GM12878 (cell line): ENCODE measurements at regions of chr5 and their contacts with region 1.

Region 1: GRCh38 chr5:176660860-176661641 is 13.8 kb downstream of the TSPAN17 start:
- DNase-seq: peak; percentile 16
- ATAC-seq: peak; percentile 89
- H3K4me3 ChIP-seq: no peak overlapping the region
- H3K27ac ChIP-seq: no peak overlapping the region
- H3K4me1 ChIP-seq: peaks cover 16% of the 10 kb centered on the region
- H3K27me3 ChIP-seq: no peaks in the 10 kb centered on the region
- CTCF ChIP-seq: peak; percentile 95 to 98 (median 96); a peak in 5 of 6 replicates
- EP300 ChIP-seq: no peak
- POLR2A ChIP-seq: no peak
- RAD21 ChIP-seq: peak; percentile 88

Region 2: GRCh38 chr5:175638305-175638704 is 1022.7 kb before region 1 on chr5:
- CTCF ChIA-PET with region 1: no interaction called
- POLR2A ChIA-PET with region 1: no interaction called
- RAD21 ChIA-PET with region 1: no interaction called
- SMC1A ChIA-PET with region 1: no interaction called
- in situ Hi-C with region 1: no loop called
- intact Hi-C with region 1: no loop called
- DNase-seq: no peak
- ATAC-seq: no peak
- H3K4me3 ChIP-seq: no peak overlapping the region
- H3K27ac ChIP-seq: no peak overlapping the region
- H3K4me1 ChIP-seq: no peaks in the 10 kb centered on the region
- H3K27me3 ChIP-seq: no peaks in the 10 kb centered on the region; a peak in 1 of 4 replicates
- CTCF ChIP-seq: no peak
- EP300 ChIP-seq: no peak
- POLR2A ChIP-seq: no peak
- RAD21 ChIP-seq: no peak

Region 3: GRCh38 chr5:176573564-176574296 is 87.3 kb before region 1 on chr5:
- CTCF ChIA-PET with region 1: interaction called, 27 read pairs
- POLR2A ChIA-PET with region 1: interaction called, 3 read pairs
- RAD21 ChIA-PET with region 1: interaction called, 5 read pairs
- SMC1A ChIA-PET with region 1: interaction called, 4 read pairs
- in situ Hi-C with region 1: no loop called
- intact Hi-C with region 1: no loop called
- DNase-seq: no peak
- ATAC-seq: peak; percentile 96
- H3K4me3 ChIP-seq: no peak overlapping the region
- H3K27ac ChIP-seq: no peak overlapping the region
- H3K4me1 ChIP-seq: no peaks in the 10 kb centered on the region
- H3K27me3 ChIP-seq: no peaks in the 10 kb centered on the region
- CTCF ChIP-seq: peak; percentile 78 to 86 (median 80)
- EP300 ChIP-seq: no peak
- POLR2A ChIP-seq: no peak
- RAD21 ChIP-seq: peak; percentile 81

Region 4: GRCh38 chr5:176675675-176676360 is 14.8 kb after region 1 on chr5:
- CTCF ChIA-PET with region 1: interaction called, 25 read pairs
- POLR2A ChIA-PET with region 1: no interaction called
- RAD21 ChIA-PET with region 1: interaction called, 16 read pairs
- SMC1A ChIA-PET with region 1: interaction called, 7 read pairs
- in situ Hi-C with region 1: no loop called
- intact Hi-C with region 1: no loop called
- DNase-seq: no peak
- ATAC-seq: no peak
- H3K4me3 ChIP-seq: no peak overlapping the region
- H3K27ac ChIP-seq: no peak overlapping the region
- H3K4me1 ChIP-seq: no peaks in the 10 kb centered on the region
- H3K27me3 ChIP-seq: peaks cover 0 to 5% of the 10 kb centered on the region in 2 experiments; a peak in 2 of 4 replicates
- CTCF ChIP-seq: peak in 2 of 3 experiments; percentile 8 to 13; a peak in 1 of 6 replicates
- EP300 ChIP-seq: no peak
- POLR2A ChIP-seq: no peak
- RAD21 ChIP-seq: no peak

Region 5: GRCh38 chr5:176744584-176744965 is 83.5 kb after region 1 on chr5:
- CTCF ChIA-PET with region 1: interaction called, 22 read pairs
- POLR2A ChIA-PET with region 1: no interaction called
- RAD21 ChIA-PET with region 1: interaction called, 13 read pairs
- SMC1A ChIA-PET with region 1: interaction called, 15 read pairs
- in situ Hi-C with region 1: no loop called
- intact Hi-C with region 1: loop called (anchors 1 kb)
- DNase-seq: no peak
- ATAC-seq: no peak; the same call in 2 of the 3 replicates
- H3K4me3 ChIP-seq: no peak overlapping the region
- H3K27ac ChIP-seq: no peak overlapping the region
- H3K4me1 ChIP-seq: no peaks in the 10 kb centered on the region; the same call in 1 of the 2 replicates
- H3K27me3 ChIP-seq: peaks cover 10 to 16% of the 10 kb centered on the region in 2 experiments
- CTCF ChIP-seq: peak in 2 of 3 experiments; percentile 26 to 40; a peak in 2 of 6 replicates
- EP300 ChIP-seq: no peak
- POLR2A ChIP-seq: no peak
- RAD21 ChIP-seq: 0 out of 2 replicates have a peak, but pooled peaks have one; percentile 13

Region 6: GRCh38 chr5:176817841-176818377 is 156.9 kb after region 1 on chr5:
- CTCF ChIA-PET with region 1: interaction called, 11 read pairs
- POLR2A ChIA-PET with region 1: no interaction called
- RAD21 ChIA-PET with region 1: interaction called, 7 read pairs
- SMC1A ChIA-PET with region 1: interaction called, 6 read pairs
- in situ Hi-C with region 1: no loop called
- intact Hi-C with region 1: no loop called
- DNase-seq: no peak
- ATAC-seq: peak; percentile 36
- H3K4me3 ChIP-seq: no peak overlapping the region
- H3K27ac ChIP-seq: no peak overlapping the region
- H3K4me1 ChIP-seq: no peaks in the 10 kb centered on the region
- H3K27me3 ChIP-seq: peaks cover 0 to 12% of the 10 kb centered on the region in 2 experiments; a peak in 3 of 4 replicates
- CTCF ChIP-seq: peak; percentile 16 to 29 (median 18); a peak in 2 of 6 replicates
- EP300 ChIP-seq: no peak
- POLR2A ChIP-seq: no peak
- RAD21 ChIP-seq: 0 out of 2 replicates have a peak, but pooled peaks have one; percentile 2

Region 7: GRCh38 chr5:176832162-176832561 is 171.1 kb after region 1 on chr5:
- CTCF ChIA-PET with region 1: no interaction called
- POLR2A ChIA-PET with region 1: no interaction called
- RAD21 ChIA-PET with region 1: no interaction called
- SMC1A ChIA-PET with region 1: no interaction called
- in situ Hi-C with region 1: no loop called
- intact Hi-C with region 1: no loop called
- DNase-seq: no peak
- ATAC-seq: no peak
- H3K4me3 ChIP-seq: no peak overlapping the region
- H3K27ac ChIP-seq: no peak overlapping the region
- H3K4me1 ChIP-seq: no peaks in the 10 kb centered on the region
- H3K27me3 ChIP-seq: no peaks in the 10 kb centered on the region; a peak in 2 of 4 replicates
- CTCF ChIP-seq: no peak
- EP300 ChIP-seq: no peak
- POLR2A ChIP-seq: no peak
- RAD21 ChIP-seq: no peak

Region 8: GRCh38 chr5:176959051-176959450 is 298.0 kb after region 1 on chr5:
- CTCF ChIA-PET with region 1: interaction called, 23 read pairs
- POLR2A ChIA-PET with region 1: no interaction called
- RAD21 ChIA-PET with region 1: interaction called, 12 read pairs
- SMC1A ChIA-PET with region 1: interaction called, 3 read pairs
- in situ Hi-C with region 1: loop called (anchors 5 kb)
- intact Hi-C with region 1: loop called (anchors 2 kb)
- DNase-seq: no peak
- ATAC-seq: peak; percentile 82
- H3K4me3 ChIP-seq: no peak overlapping the region
- H3K27ac ChIP-seq: no peak overlapping the region
- H3K4me1 ChIP-seq: no peaks in the 10 kb centered on the region
- H3K27me3 ChIP-seq: no peaks in the 10 kb centered on the region
- CTCF ChIP-seq: peak; percentile 32 to 59 (median 37); a peak in 4 of 6 replicates
- EP300 ChIP-seq: no peak
- POLR2A ChIP-seq: no peak
- RAD21 ChIP-seq: peak; percentile 54